Activated naive CD4-positive, alpha-beta T cell treated with anti-CD3 and anti-CD28 coated beads for 36 hours (primary cell): ENCODE measurements at regions of chr9 and their contacts with region 1.

Region 1: DNA sequence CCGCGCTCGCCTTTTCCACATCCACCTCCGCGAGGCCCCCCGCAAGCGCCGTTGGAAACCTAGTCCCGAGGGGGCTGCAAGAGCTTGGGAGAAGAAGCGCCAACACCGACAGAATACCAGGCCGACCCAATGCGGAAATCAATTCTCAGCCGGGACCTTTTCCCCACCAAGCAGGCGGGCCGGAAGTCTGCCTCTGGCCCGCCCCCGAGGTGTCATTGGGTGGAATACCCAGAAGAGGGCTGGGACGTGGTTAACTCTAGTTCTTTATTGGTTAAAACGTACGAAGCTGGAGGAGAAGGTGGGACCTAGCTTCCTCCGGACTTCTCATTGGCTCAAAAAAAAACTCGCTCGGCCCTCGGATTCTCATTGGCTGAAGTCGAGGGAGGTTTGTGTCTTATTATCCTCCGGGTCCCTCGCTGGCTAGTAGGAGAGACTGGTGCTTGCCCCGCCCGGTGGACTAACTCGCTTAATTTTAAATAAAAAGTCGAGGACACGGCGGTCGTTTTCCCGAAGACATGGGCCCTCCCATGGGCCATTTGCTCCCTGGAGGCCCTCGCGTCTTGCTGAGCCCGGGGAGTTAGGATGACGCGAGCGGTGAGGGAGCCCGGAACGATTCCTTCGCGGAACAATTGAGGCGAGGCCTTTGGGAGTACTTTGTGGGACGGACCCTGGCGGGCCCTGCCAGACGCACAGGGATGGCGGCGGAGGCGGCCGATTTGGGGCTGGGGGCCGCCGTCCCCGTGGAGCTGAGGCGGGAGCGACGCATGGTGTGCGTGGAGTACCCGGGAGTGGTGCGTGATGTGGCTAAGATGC is at the start of gene GTF3C5:
- DNase-seq: peak; percentile 95
- H3K4me3 Mint-ChIP-seq: peak within 1 kb of the TSS; percentile 98
- H3K27ac Mint-ChIP-seq: peak within 1 kb of the TSS; percentile 98
- H3K4me1 Mint-ChIP-seq: peaks cover 42% of the 10 kb centered on the region
- H3K27me3 Mint-ChIP-seq: no peaks in the 10 kb centered on the region
- total RNA-seq, gene GTF3C5: 102 to 108 TPM

Region 2: DNA sequence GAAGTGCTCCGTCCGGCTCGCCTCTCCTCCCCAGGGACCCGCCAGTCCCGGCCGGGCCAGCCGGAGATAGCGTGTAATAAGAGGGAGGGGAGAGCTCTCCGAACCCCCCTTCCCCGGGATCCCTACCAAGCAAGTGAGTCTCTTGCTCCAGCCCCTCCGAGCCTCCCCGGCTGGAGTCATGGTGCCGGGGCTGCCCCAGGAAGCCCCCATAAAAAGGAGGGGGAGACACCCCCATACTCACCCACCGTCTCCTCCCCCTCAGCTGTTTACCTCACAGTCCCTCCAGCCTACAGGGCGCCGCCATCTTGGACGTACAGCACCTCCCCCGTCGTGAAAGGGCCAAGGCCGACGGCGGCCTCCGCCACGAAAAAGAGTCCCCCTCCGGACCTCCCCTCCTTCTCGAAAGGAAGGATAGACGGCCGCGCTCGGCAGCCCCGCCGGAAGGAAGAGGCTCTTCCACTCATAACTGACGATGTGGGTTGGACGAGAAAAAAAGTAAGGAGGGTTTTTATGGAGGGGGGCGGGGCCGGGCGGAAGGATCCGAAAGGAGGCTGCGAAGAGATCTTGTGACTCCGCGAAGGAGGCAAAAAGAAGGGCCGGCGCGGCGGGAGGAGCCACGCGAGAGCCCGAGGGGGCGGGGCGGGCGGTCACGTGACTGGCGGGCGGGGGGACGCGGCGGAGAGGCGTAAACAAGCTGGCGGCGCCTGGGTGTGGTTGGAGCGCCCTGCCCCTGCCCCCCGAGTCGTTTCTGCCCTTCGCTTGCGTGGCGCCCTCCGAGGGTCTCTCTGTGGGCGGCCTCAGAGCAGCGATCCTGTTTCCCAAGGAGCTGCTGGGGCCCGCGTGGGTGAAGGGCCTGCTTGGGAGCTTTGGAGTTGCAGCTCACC is 86.0 kb before region 1 on chr9 and contains the start of gene TSC1:
- CTCF ChIA-PET with region 1: no interaction called
- intact Hi-C with region 1: loop called (anchors 5 kb)
- DNase-seq: peak; percentile 97
- H3K4me3 Mint-ChIP-seq: peak within 1 kb of the TSS; percentile 97
- H3K27ac Mint-ChIP-seq: peak within 1 kb of the TSS; percentile 99
- H3K4me1 Mint-ChIP-seq: peaks cover 27% of the 10 kb centered on the region
- H3K27me3 Mint-ChIP-seq: no peaks in the 10 kb centered on the region
- total RNA-seq, gene TSC1: 18.8 to 19.7 TPM

Region 3: GRCh38 chr9:133058550-133059320 is 28.2 kb after region 1 on chr9:
- CTCF ChIA-PET with region 1: interaction called, 4 read pairs
- intact Hi-C with region 1: loop called (anchors 2 kb)
- DNase-seq: peak; percentile 30
- H3K4me3 Mint-ChIP-seq: no peak overlapping the region
- H3K27ac Mint-ChIP-seq: peak overlapping the region; percentile 71
- H3K4me1 Mint-ChIP-seq: peaks cover 55% of the 10 kb centered on the region
- H3K27me3 Mint-ChIP-seq: no peaks in the 10 kb centered on the region

Region 4: DNA sequence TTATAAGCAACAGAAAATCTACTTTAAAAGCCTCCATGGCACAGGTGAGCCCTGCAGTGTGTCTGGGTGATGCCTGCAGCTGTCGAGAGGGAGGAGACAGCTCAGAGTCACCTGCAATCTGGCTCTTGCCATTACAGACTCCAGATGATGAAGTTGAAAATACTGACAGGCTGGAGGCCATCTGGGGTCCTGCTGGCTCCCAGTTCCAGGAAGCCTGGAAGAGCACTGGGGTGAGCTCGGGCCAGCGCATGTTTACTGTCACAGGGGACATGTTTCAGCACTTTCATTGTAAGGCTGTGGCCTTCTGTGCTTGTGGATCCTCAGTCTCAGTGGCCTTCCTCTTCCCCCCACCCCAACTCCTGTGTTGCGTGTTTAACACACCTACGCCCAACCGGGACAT is 59.7 kb after region 1 on chr9:
- CTCF ChIA-PET with region 1: no interaction called
- intact Hi-C with region 1: no loop called
- DNase-seq: no peak
- H3K4me3 Mint-ChIP-seq: no peak overlapping the region
- H3K27ac Mint-ChIP-seq: no peak overlapping the region
- H3K4me1 Mint-ChIP-seq: no peaks in the 10 kb centered on the region
- H3K27me3 Mint-ChIP-seq: no peaks in the 10 kb centered on the region

Region 5: DNA sequence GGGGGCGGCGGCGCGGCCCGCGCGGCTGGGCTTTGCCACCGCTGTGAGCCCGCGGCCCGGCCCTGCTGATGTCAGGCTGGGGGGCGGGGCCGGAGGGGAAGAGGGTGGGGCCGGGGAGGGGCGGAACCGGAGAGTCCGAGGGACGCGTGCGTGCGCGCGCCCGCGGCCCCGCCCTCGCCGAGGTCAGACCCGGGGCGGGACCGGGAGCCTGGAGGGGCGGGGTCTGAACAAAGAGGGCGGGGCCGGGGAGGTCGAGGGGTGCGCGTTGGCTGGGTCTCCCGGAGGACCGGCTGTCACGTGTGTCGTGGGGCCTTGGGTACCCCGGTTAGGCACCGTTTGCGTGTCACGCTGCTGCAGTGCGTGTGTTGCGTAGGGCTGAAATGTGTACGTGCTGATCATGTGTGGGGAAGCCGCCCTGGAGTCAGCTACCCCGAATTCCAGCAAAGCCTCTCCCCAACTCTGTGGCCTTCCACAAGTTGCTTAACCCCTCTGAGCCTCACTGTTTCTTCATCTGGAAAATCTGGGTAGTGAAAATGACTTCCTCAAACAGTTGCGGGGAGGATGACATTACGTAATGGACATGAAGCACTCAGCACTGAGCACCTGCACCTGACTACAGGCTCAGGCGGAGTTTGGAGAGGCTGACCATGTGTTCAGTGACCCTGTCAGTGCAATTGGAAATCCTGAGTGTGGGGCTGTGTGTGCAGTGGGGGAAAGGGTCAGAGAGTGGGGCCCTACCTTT is 90.8 kb after region 1 on chr9 and contains the start of gene RALGDS:
- CTCF ChIA-PET with region 1: no interaction called
- intact Hi-C with region 1: loop called (anchors 1 kb)
- DNase-seq: peak; percentile 91
- H3K4me3 Mint-ChIP-seq: peak within 1 kb of the TSS; percentile 78
- H3K27ac Mint-ChIP-seq: peak within 1 kb of the TSS; percentile 89
- H3K4me1 Mint-ChIP-seq: peaks cover 43% of the 10 kb centered on the region
- H3K27me3 Mint-ChIP-seq: no peaks in the 10 kb centered on the region
- total RNA-seq, gene RALGDS: 29.5 to 32.5 TPM

Region 6: GRCh38 chr9:133133681-133134418 is 103.3 kb after region 1 on chr9:
- CTCF ChIA-PET with region 1: interaction called, 3 read pairs
- intact Hi-C with region 1: loop called (anchors 1 kb)
- DNase-seq: peak; percentile 96
- H3K4me3 Mint-ChIP-seq: peak overlapping the region; percentile 38
- H3K27ac Mint-ChIP-seq: peak overlapping the region; percentile 96
- H3K4me1 Mint-ChIP-seq: peaks cover 70% of the 10 kb centered on the region
- H3K27me3 Mint-ChIP-seq: no peaks in the 10 kb centered on the region

Region 7: DNA sequence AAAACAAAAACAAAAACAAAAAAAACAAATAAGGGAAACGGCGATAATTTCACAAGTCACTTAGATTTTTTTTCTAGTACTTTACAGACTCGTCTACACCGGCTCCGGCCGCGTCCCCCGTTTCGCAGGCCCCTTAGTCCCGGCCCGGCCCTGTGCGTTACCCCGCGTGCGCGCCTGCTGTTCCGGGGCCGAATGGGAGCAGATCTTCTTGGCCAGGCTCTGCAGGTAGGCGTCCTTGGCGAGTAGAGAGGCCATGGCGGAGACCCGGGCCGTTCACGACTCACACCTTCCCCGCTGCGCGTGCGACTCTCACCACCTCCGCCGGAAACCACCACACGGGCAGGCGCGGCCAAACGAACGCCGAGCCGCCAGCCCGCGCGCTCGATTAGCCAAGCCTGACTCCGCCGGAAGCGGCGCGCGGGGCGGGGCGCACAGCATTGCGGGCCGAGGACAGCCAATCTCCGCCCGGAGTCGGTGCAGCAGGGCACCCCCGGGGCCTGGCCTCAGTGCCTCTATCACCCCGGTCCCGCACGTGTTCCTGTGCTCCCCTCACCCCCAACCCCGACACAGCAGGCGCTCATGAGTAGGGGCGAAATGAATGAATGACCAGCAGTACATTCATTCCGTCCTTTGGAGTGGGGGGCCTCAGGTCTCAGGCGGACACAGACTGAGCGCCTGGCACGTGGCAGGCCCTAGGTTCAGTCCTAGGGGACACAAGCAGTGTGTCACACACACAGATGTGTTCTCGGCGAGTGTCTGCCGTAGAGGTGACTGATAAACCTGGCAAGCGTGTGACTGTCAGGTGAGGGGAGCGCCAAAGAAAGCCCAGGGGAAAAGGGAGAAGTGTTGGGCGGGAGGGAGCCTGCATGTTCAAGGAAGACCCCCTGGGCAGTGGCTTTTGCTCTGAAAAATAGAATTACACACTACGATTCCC is 305.6 kb after region 1 on chr9 and contains the start of gene SURF6:
- CTCF ChIA-PET with region 1: no interaction called
- intact Hi-C with region 1: loop called (anchors 1 kb)
- DNase-seq: peak; percentile 95
- H3K4me3 Mint-ChIP-seq: peak within 1 kb of the TSS; percentile 97
- H3K27ac Mint-ChIP-seq: peak within 1 kb of the TSS; percentile 87
- H3K4me1 Mint-ChIP-seq: peaks cover 40% of the 10 kb centered on the region
- H3K27me3 Mint-ChIP-seq: no peaks in the 10 kb centered on the region
- total RNA-seq, gene SURF6: 13.6 to 13.8 TPM

Region 8: DNA sequence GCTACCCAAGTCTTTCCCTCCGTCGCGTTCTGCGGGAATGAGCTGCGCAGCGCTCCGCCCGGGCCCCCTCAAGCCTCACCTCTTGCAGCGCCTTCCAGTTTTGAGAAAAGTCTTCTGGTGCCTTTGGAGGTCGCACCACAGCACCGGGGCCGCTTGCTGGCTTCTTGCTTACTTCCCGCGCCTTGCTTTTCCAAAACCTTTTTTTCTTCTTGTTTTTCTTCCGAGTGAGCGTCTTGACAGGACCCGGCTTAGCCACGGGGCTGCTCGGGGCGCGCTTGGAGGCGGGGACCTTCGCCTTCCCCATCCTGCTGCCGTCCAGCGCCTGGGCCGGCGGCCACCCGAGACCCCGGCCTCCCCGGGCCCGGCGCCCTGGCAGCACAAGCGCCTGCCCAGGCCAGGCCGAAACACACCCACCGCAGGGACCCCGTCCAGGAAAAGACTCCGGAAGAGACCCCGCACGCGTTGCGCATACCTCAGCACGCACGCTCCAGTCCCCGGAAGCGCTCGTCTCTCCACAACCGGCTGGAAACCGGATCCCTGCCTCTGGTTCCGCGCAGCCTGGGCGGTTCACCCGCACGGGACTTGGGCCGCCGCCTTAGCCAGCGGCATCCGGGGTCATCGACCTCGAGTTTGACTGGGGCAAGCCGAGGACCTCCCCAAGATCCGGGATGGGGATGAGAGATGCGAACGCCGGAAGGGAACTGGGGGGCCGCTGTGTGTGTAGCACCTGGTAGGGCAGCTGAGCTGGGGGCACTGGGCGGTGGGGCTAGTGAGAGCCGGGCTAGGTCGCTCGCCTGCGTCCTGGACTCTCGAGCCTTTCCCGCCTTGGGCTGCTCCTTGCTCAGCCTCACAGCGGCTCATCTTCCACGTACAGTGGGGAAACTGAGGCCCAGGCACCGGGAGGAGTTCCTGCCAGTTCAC is 387.3 kb after region 1 on chr9 and contains the start of gene REXO4:
- CTCF ChIA-PET with region 1: no interaction called
- intact Hi-C with region 1: loop called (anchors 10 kb)
- DNase-seq: peak; percentile 86
- H3K4me3 Mint-ChIP-seq: peak within 1 kb of the TSS; percentile 92
- H3K27ac Mint-ChIP-seq: peak within 1 kb of the TSS; percentile 91
- H3K4me1 Mint-ChIP-seq: peaks cover 54% of the 10 kb centered on the region
- H3K27me3 Mint-ChIP-seq: no peaks in the 10 kb centered on the region
- total RNA-seq, gene REXO4: 22.5 to 27.0 TPM